H1 (cell line): ENCODE measurements at regions of chr4 and their contacts with region 1.

Region 1: GRCh38 chr4:25131926-25132325 is 28.3 kb downstream of the SEPSECS start:
- DNase-seq: peak in 1 of 2 experiments; percentile 10
- H3K4me3 ChIP-seq: peak overlapping the region in 1 of 4 experiments; percentile 13; a peak in 1 of 8 replicates
- H3K27ac ChIP-seq: no peak overlapping the region
- H3K4me1 ChIP-seq: peaks cover 0 to 8% (median 3%) of the 10 kb centered on the region in 4 experiments; a peak in 3 of 7 replicates
- H3K27me3 ChIP-seq: no peaks in the 10 kb centered on the region
- CTCF ChIP-seq: no peak
- EP300 ChIP-seq: no peak
- POLR2A ChIP-seq: no peak
- RAD21 ChIP-seq: no peak

Region 2: DNA sequence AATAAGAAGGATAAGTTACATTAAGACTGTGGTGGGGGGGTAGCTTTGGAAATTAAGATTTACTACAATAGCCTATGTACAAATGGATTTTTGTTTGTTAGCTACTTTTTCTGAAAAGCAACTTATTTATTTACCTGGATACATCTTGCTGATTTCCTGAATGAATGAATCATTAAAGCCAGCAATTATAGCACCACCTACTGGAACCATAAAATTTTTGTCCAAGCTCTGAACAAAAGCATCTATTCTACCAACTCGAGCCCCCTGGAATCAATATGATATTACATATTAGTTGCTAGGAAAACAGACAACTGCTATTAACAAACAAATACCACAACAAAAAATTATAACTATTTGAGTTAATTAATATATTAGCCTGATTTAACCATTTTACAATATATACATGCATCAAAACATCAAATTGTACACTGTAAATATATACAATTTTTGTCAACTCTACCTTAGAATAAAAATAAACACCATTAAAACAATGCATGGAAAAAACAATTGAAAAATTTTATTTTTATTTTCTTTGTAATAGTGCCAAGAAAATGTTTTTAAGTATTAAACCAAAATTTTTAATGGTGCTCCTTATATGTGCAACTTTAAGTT is 13.1 kb after region 1 on chr4:
- CTCF ChIA-PET with region 1: interaction called, 11 read pairs
- POLR2A ChIA-PET with region 1: no interaction called
- DNase-seq: no peak
- H3K4me3 ChIP-seq: no peak overlapping the region
- H3K27ac ChIP-seq: no peak overlapping the region
- H3K4me1 ChIP-seq: no peaks in the 10 kb centered on the region
- H3K27me3 ChIP-seq: no peaks in the 10 kb centered on the region
- CTCF ChIP-seq: peak in 1 of 3 experiments; percentile 37; a peak in 2 of 4 replicates
- EP300 ChIP-seq: no peak
- POLR2A ChIP-seq: no peak
- RAD21 ChIP-seq: peak; percentile 42 to 46